ENCODE measurements at regions of chr1 and their contacts with region 1.

Region 1: GRCh38 chr1:113768901-113769600 is 9.8 kb upstream of the PHTF1 start:
- DNase-seq: no peak
- H3K4me3 ChIP-seq: no peak overlapping the region
- H3K27ac ChIP-seq: no peak overlapping the region
- H3K4me1 ChIP-seq: peaks cover 6% of the 10 kb centered on the region
- H3K27me3 ChIP-seq: no peaks in the 10 kb centered on the region
- CTCF ChIP-seq: no peak
- EP300 ChIP-seq: no peak
- POLR2A ChIP-seq: no peak

Region 2: GRCh38 chr1:113576271-113576670 is 192.8 kb before region 1 on chr1:
- intact Hi-C with region 1: no loop called
- DNase-seq: no peak
- H3K4me3 ChIP-seq: no peak overlapping the region
- H3K27ac ChIP-seq: no peak overlapping the region
- H3K4me1 ChIP-seq: no peaks in the 10 kb centered on the region
- H3K27me3 ChIP-seq: no peaks in the 10 kb centered on the region
- CTCF ChIP-seq: no peak
- EP300 ChIP-seq: no peak
- POLR2A ChIP-seq: no peak

Region 3: DNA sequence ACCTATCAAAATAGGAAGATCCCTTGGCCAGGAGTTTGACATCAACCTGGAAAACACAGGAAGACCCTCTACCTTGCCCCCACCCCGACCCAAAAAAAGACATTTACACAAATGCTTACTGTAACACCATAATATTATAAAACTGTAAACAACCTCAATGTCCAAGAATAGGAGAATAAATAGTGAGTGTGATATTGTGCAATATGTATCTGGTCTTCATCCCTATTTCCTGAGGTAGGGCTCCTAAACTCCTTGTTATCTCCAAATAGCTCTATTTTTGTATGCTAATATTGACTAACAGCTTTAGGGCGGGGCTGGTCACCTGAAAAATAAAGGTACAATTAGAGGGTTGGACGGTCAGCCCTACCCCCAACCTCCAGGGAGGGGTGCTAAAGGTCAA is 19.7 kb after region 1 on chr1:
- intact Hi-C with region 1: loop called in 1 of 4 experiments (anchors 1 kb)
- DNase-seq: no peak
- H3K4me3 ChIP-seq: no peak overlapping the region
- H3K27ac ChIP-seq: no peak overlapping the region
- H3K4me1 ChIP-seq: peaks cover 2% of the 10 kb centered on the region
- H3K27me3 ChIP-seq: no peaks in the 10 kb centered on the region
- CTCF ChIP-seq: no peak
- EP300 ChIP-seq: no peak
- POLR2A ChIP-seq: no peak

Measured in ovary (tissue), 10 donors.